PC-3 (cell line): ENCODE measurements at regions of chr3 and their contacts with region 1.

Region 1: DNA sequence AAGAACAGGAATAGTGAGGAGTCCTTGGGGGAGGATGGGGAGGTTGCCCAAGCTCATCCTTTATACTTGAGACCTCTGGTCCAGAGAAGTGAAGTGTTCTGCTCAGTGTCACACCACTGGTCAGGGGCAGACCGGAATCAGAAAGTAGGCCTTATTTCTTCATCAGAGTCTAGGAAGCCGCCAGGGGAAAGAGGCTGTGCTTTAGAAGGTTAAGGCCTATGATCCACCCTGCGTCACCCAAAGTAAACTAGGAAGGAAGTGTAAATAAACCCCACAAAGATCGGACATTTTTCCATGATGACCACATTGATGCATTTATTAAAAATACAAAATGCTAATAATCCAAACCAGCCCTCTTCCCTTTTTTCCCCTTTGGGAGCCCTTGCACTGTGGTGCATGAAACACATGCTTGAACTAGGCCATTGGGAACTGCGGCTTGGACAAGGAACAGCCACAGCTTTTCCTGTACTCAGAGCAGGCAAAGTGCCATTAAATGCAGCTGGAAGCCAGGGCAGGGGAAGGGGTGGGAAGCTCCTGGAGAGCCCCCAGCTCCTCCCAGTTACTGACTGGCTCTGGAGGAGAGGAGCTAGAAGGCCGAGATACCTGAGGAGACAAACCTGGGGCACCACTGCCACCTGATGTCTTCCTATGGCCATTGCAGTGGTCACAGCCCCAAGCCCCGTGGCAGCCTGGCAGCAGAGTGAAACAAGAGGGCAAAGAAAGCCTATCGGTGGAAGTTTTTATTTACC is 37.0 kb downstream of the CDC25A start:
- DNase-seq: peak; percentile 89
- ATAC-seq: peak; percentile 87
- H3K4me3 ChIP-seq: peak overlapping the region; percentile 23; the same call in 1 of the 2 replicates
- H3K27ac ChIP-seq: peak overlapping the region; percentile 60
- H3K4me1 ChIP-seq: peaks cover 35% of the 10 kb centered on the region
- H3K27me3 ChIP-seq: no peaks in the 10 kb centered on the region
- CTCF ChIP-seq: peak; percentile 97

Region 2: GRCh38 chr3:47849699-47850563 is 301.3 kb before region 1 on chr3:
- CTCF ChIA-PET with region 1: no interaction called
- POLR2A ChIA-PET with region 1: no interaction called
- intact Hi-C with region 1: loop called (anchors 5 kb)
- DNase-seq: peak; percentile 46
- ATAC-seq: peak; percentile 68
- H3K4me3 ChIP-seq: no peak overlapping the region
- H3K27ac ChIP-seq: no peak overlapping the region
- H3K4me1 ChIP-seq: no peaks in the 10 kb centered on the region
- H3K27me3 ChIP-seq: no peaks in the 10 kb centered on the region
- CTCF ChIP-seq: peak; percentile 67

Region 3: GRCh38 chr3:47989981-47990440 is 161.2 kb before region 1 on chr3:
- CTCF ChIA-PET with region 1: interaction called, 25 read pairs
- POLR2A ChIA-PET with region 1: no interaction called
- intact Hi-C with region 1: loop called (anchors 1 kb)
- DNase-seq: peak; percentile 94
- ATAC-seq: peak; percentile 98
- H3K4me3 ChIP-seq: no peak overlapping the region
- H3K27ac ChIP-seq: no peak overlapping the region
- H3K4me1 ChIP-seq: peaks cover 16% of the 10 kb centered on the region
- H3K27me3 ChIP-seq: no peaks in the 10 kb centered on the region
- CTCF ChIP-seq: peak; percentile 98

Region 4: GRCh38 chr3:48088749-48089466 is 62.3 kb before region 1 on chr3:
- CTCF ChIA-PET with region 1: interaction called, 27 read pairs
- POLR2A ChIA-PET with region 1: interaction called, 10 read pairs
- intact Hi-C with region 1: loop called (anchors 1 kb)
- DNase-seq: peak; percentile 98
- ATAC-seq: peak; percentile 87
- H3K4me3 ChIP-seq: peak overlapping the region; percentile 84
- H3K27ac ChIP-seq: peak overlapping the region; percentile 97
- H3K4me1 ChIP-seq: peaks cover 32% of the 10 kb centered on the region
- H3K27me3 ChIP-seq: no peaks in the 10 kb centered on the region
- CTCF ChIP-seq: no peak